ENCODE measurements at regions of chr6 and their contacts with region 1.

Region 1: GRCh38 chr6:134174672-134175198 is 122.3 kb upstream of the SLC2A12 start:
- DNase-seq: peak; percentile 88
- H3K4me3 Mint-ChIP-seq: peak overlapping the region; percentile 95
- H3K27ac Mint-ChIP-seq: peak overlapping the region; percentile 92
- H3K4me1 Mint-ChIP-seq: peaks cover 43% of the 10 kb centered on the region
- H3K27me3 Mint-ChIP-seq: no peaks in the 10 kb centered on the region
- CTCF ChIP-seq: no peak

Region 2: GRCh38 chr6:134347916-134348805 is 173.4 kb after region 1 on chr6:
- CTCF ChIA-PET with region 1: no interaction called
- POLR2A ChIA-PET with region 1: interaction called, 5 read pairs
- intact Hi-C with region 1: loop called (anchors 2 kb)
- DNase-seq: peak; percentile 89
- H3K4me3 Mint-ChIP-seq: peak overlapping the region; percentile 60
- H3K27ac Mint-ChIP-seq: peak overlapping the region; percentile 71
- H3K4me1 Mint-ChIP-seq: peaks cover 13% of the 10 kb centered on the region
- H3K27me3 Mint-ChIP-seq: no peaks in the 10 kb centered on the region
- CTCF ChIP-seq: no peak

Region 3: GRCh38 chr6:134422426-134423231 is 247.9 kb after region 1 on chr6:
- CTCF ChIA-PET with region 1: interaction called, 3 read pairs
- POLR2A ChIA-PET with region 1: interaction called, 4 read pairs
- intact Hi-C with region 1: loop called (anchors 5 kb)
- DNase-seq: peak; percentile 88
- H3K4me3 Mint-ChIP-seq: peak overlapping the region; percentile 23
- H3K27ac Mint-ChIP-seq: peak overlapping the region; percentile 92
- H3K4me1 Mint-ChIP-seq: peaks cover 46% of the 10 kb centered on the region
- H3K27me3 Mint-ChIP-seq: no peaks in the 10 kb centered on the region
- CTCF ChIP-seq: no peak

Region 4: DNA sequence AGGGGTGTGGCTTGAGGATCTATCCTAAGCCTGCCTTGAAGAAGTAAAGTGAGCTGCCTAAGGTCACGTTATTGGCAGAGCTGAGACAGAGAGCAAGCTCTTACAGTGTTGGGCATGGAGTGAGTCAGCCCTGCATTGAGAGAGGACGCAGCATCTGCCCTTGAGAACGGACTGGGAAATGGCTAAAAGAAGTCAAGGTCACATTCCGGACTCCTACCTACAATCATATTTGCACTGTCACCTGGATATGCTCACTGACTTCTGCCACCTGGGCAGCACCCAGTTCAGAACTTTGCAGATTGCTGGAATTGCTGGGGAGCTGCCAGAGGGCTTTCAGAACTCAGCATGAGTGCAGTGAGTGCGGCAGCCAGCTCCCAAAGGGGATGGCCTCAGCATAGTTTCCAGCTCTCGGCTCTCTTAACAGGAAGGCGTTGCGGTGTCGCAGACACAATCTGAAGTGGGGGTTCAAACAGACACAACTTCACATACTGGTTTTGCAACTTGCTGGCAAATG is 342.5 kb after region 1 on chr6:
- CTCF ChIA-PET with region 1: interaction called, 4 read pairs
- POLR2A ChIA-PET with region 1: interaction called, 10 read pairs
- intact Hi-C with region 1: no loop called
- DNase-seq: peak; percentile 95
- H3K4me3 Mint-ChIP-seq: peak overlapping the region; percentile 53
- H3K27ac Mint-ChIP-seq: peak overlapping the region; percentile 73
- H3K4me1 Mint-ChIP-seq: peaks cover 41% of the 10 kb centered on the region
- H3K27me3 Mint-ChIP-seq: no peaks in the 10 kb centered on the region
- CTCF ChIP-seq: no peak

Region 5: DNA sequence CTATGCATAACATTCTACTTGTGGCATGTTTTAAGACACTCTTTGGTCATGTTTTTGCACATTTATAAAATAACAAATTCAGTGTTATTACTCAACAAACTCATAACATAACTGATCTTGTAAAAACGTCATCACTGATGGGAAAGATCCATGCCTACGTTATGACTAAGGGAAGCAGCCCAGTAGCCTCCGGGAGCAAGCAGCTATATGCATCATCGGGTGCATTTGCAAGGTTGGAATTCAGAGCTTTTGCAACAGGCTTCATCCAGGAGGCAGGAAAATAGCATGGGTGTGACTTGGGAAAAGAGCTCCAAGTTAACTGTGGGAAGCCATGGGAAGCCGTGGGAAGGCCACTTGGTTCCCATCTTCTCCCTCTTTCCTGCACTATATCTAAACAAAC is 414.8 kb after region 1 on chr6:
- CTCF ChIA-PET with region 1: interaction called, 6 read pairs
- POLR2A ChIA-PET with region 1: interaction called, 17 read pairs
- intact Hi-C with region 1: no loop called
- DNase-seq: peak; percentile 99
- H3K4me3 Mint-ChIP-seq: no peak overlapping the region
- H3K27ac Mint-ChIP-seq: peak overlapping the region; percentile 95
- H3K4me1 Mint-ChIP-seq: peaks cover 36% of the 10 kb centered on the region
- H3K27me3 Mint-ChIP-seq: no peaks in the 10 kb centered on the region
- CTCF ChIP-seq: no peak

Region 6: GRCh38 chr6:134882426-134883038 is 707.8 kb after region 1 on chr6:
- CTCF ChIA-PET with region 1: interaction called, 9 read pairs
- POLR2A ChIA-PET with region 1: interaction called, 7 read pairs
- intact Hi-C with region 1: loop called (anchors 1 kb)
- DNase-seq: peak; percentile 82
- H3K4me3 Mint-ChIP-seq: no peak overlapping the region
- H3K27ac Mint-ChIP-seq: no peak overlapping the region
- H3K4me1 Mint-ChIP-seq: peaks cover 16% of the 10 kb centered on the region
- H3K27me3 Mint-ChIP-seq: no peaks in the 10 kb centered on the region
- CTCF ChIP-seq: peak; percentile 94